Spleen (tissue), 13 donors: ENCODE measurements at regions of chr17 and their contacts with region 1.

Region 1: GRCh38 chr17:35747540-35748017 is 5.5 kb downstream of the GAS2L2 start:
- DNase-seq: peak; percentile 85
- H3K4me3 ChIP-seq: no peak overlapping the region
- H3K27ac ChIP-seq: no peak overlapping the region
- H3K4me1 ChIP-seq: peaks cover 0 to 21% (median 9%) of the 10 kb centered on the region in 6 donors
- H3K27me3 ChIP-seq: peaks cover 4 to 95% (median 39%) of the 10 kb centered on the region in 7 donors
- CTCF ChIP-seq: peak; percentile 79 to 97 (median 92)
- POLR2A ChIP-seq: no peak

Region 2: GRCh38 chr17:35161281-35161761 is 586.3 kb before region 1 on chr17:
- intact Hi-C with region 1: loop called (anchors 10 kb)
- DNase-seq: peak; percentile 38
- H3K4me3 ChIP-seq: peak overlapping the region in 1 of 8 donors; percentile 40
- H3K27ac ChIP-seq: peak overlapping the region in 7 of 8 donors; percentile 1 to 80 (median 62)
- H3K4me1 ChIP-seq: peaks cover 0 to 40% (median 17%) of the 10 kb centered on the region in 6 donors
- H3K27me3 ChIP-seq: no peaks in the 10 kb centered on the region
- CTCF ChIP-seq: no peak
- POLR2A ChIP-seq: no peak

Region 3: GRCh38 chr17:35312790-35313711 is 434.5 kb before region 1 on chr17:
- intact Hi-C with region 1: loop called (anchors 10 kb)
- DNase-seq: peak; percentile 89
- H3K4me3 ChIP-seq: peak overlapping the region; percentile 16 to 67 (median 42)
- H3K27ac ChIP-seq: peak overlapping the region; percentile 64 to 87 (median 84)
- H3K4me1 ChIP-seq: peaks cover 3 to 34% (median 24%) of the 10 kb centered on the region in 6 donors
- H3K27me3 ChIP-seq: no peaks in the 10 kb centered on the region
- CTCF ChIP-seq: peak; percentile 73 to 92 (median 85)
- POLR2A ChIP-seq: no peak

Region 4: DNA sequence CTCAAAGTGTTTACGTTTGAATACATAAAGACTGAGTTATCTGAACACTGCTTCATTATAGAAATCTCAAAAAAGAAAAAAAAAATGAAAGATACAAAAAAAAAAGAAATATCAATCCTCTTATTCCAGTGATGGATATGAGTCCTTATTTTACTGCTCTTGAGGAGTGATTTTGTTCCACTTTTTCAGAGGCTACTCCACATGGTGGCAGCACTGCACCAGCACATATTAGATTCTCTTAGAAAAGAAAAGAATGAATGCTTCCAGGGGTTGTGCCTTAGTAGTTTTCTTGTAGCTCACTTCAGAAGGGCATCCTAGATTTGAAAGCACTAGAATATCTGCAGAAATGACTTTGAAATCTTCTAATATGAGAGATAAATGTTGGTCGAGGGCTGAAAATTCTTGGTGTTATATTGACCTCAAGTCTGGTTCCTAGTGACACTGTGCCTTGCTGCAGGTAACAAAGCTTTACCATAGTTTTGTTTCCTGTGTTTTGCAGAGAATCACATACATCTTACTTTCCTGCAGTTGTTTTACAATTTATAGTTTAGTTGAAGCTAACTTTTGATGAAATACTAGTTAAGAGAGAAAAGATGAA is 134.6 kb before region 1 on chr17:
- intact Hi-C with region 1: loop called (anchors 2 kb)
- DNase-seq: no peak
- H3K4me3 ChIP-seq: no peak overlapping the region
- H3K27ac ChIP-seq: no peak overlapping the region
- H3K4me1 ChIP-seq: peaks cover 0 to 31% (median 5%) of the 10 kb centered on the region in 6 donors
- H3K27me3 ChIP-seq: no peaks in the 10 kb centered on the region
- CTCF ChIP-seq: peak in 9 of 11 experiments; percentile 4 to 60 (median 43)
- POLR2A ChIP-seq: no peak